Activated naive CD4-positive, alpha-beta T cell treated with anti-CD3 and anti-CD28 coated beads, Interleukin-2, amount 10 ng/mL, durations not matched to agents 7 days and 5 days (primary cell): ENCODE measurements at regions of chr15 and their contacts with region 1.

Region 1: GRCh38 chr15:99704444-99704838 is 28.8 kb downstream of the LYSMD4 start:
- DNase-seq: no peak
- H3K4me3 Mint-ChIP-seq: no peak overlapping the region
- H3K27ac Mint-ChIP-seq: no peak overlapping the region
- H3K4me1 Mint-ChIP-seq: peaks cover 51% of the 10 kb centered on the region
- H3K27me3 Mint-ChIP-seq: no peaks in the 10 kb centered on the region

Region 2: DNA sequence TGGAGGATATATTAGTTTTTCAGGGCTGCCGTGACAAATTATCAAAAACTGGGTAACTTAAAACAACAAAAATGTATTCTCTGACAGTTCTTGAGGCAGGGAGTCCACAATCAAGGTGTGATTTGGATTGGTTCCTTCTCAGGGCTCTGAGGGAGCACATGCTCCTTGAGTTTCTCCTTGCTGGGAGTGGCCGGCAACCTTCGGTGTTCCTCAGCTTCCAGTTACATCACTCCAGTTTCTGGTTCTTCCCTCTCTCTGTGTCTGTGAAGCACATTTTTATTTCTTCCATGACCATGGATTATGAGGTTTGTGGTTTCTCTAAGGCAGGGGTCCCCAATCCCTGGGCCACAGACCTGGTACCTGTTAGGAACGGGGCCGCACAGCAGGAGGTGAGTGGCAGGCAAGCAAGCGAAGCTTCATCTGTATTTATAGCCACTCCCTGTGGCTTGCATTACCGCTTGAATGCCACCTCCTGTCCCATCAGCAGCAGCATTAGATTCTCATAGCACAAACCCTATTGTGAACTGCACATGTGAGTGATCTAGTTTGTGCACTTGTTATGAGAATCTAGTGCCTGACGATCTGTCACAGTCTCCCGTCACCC is 428.8 kb before region 1 on chr15:
- CTCF ChIA-PET with region 1: interaction called, 99 read pairs
- DNase-seq: no peak
- H3K4me3 Mint-ChIP-seq: no peak overlapping the region
- H3K27ac Mint-ChIP-seq: no peak overlapping the region
- H3K4me1 Mint-ChIP-seq: peaks cover 24% of the 10 kb centered on the region
- H3K27me3 Mint-ChIP-seq: no peaks in the 10 kb centered on the region

Region 3: DNA sequence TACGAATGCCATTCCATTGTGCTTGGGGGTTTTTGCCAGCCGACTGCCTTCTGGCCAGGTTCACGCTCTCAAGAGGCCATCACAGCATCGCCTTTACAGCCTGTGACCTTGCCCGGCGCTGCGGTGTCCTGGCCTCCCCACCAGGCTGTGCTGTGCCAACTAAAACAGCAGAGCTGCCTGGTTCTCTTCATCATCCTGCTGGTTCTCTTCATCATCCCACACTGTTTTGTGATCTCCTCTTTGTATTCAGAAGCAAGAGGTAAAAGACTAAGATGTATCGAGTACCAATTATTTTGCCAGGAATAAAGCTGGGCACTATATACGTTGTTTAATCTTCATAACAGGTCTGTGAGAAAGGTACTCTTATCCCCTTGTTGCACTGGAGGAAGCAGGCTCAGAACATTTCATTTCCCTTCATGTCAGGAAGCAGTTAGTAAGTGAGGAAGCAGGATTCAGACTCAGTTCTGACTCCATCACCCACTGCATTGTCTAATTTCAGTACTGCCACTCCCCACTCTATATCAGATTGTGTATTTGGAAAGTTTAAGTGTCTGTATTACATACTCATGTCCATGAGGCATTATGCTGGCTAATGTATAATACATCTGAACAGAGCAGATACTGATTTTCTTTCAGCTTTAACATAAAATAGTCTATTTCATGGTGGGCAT is 360.4 kb before region 1 on chr15:
- CTCF ChIA-PET with region 1: interaction called, 13 read pairs
- DNase-seq: peak; percentile 62
- H3K4me3 Mint-ChIP-seq: no peak overlapping the region
- H3K27ac Mint-ChIP-seq: no peak overlapping the region
- H3K4me1 Mint-ChIP-seq: peaks cover 11% of the 10 kb centered on the region
- H3K27me3 Mint-ChIP-seq: no peaks in the 10 kb centered on the region

Region 4: GRCh38 chr15:99409097-99409473 is 295.4 kb before region 1 on chr15:
- CTCF ChIA-PET with region 1: interaction called, 14 read pairs
- DNase-seq: peak; percentile 61
- H3K4me3 Mint-ChIP-seq: no peak overlapping the region
- H3K27ac Mint-ChIP-seq: no peak overlapping the region
- H3K4me1 Mint-ChIP-seq: peaks cover 22% of the 10 kb centered on the region
- H3K27me3 Mint-ChIP-seq: peaks cover 13% of the 10 kb centered on the region

Region 5: GRCh38 chr15:99565299-99566156 is 138.9 kb before region 1 on chr15 and contains the start of gene MEF2A:
- CTCF ChIA-PET with region 1: interaction called, 11 read pairs
- DNase-seq: peak; percentile 94
- H3K4me3 Mint-ChIP-seq: peak within 1 kb of the TSS; percentile 96
- H3K27ac Mint-ChIP-seq: peak within 1 kb of the TSS; percentile 95
- H3K4me1 Mint-ChIP-seq: peaks cover 42% of the 10 kb centered on the region
- H3K27me3 Mint-ChIP-seq: peaks cover 43% of the 10 kb centered on the region

Region 6: DNA sequence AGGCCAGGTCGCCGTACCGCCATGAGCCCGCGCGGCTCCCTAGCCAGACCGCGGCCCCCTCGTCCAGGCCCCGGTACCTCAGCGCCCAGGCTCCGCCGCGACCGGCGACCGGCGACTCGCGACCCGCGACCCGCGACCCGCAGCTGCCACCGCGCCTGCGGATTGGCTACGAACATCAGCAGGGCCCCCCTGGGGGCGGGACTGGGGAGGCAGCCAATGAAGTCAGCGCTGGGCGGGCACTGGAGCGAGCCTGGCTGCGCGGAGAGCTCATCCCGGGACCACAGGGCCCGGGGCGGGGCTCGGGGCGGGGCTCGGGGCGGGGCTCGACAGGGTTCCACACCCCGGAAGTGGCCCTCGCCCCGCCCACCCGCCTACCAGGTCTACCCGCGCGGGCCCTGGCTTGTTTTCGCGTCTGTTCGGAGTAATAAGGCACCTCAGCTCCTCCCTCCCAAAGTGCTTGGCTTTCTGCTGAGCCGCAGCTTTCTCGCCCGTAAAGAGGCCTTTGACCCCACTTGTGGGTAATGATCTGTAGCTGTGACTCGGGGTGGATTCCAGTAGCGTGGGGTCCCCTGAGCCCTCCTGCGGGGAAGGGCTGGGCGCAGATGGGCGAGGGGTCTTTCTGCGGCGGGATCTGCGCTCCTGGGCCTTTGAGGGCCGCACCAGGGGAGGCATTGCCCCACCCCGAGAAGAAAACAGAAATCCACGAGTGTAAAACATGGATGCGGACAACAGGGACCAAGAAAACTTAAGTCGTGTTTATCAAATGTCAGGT is 29.0 kb after region 1 on chr15 and contains the start of gene LYSMD4:
- CTCF ChIA-PET with region 1: interaction called, 22 read pairs
- DNase-seq: peak; percentile 99
- H3K4me3 Mint-ChIP-seq: peak within 1 kb of the TSS; percentile 83
- H3K27ac Mint-ChIP-seq: peak within 1 kb of the TSS; percentile 96
- H3K4me1 Mint-ChIP-seq: peaks cover 42% of the 10 kb centered on the region
- H3K27me3 Mint-ChIP-seq: no peaks in the 10 kb centered on the region